ENCODE measurements at regions of chr11 and their contacts with region 1.

Region 1: GRCh38 chr11:73184953-73185671 is 33.0 kb upstream of the P2RY2 start:
- DNase-seq: peak in 8 of 9 experiments; percentile 10 to 59 (median 46)
- ATAC-seq: peak; percentile 74
- H3K4me3 ChIP-seq: no peak overlapping the region
- H3K4me3 Mint-ChIP-seq: no peak overlapping the region
- H3K27ac ChIP-seq: no peak overlapping the region
- H3K27ac Mint-ChIP-seq: no peak overlapping the region
- H3K4me1 ChIP-seq: peaks cover 5% of the 10 kb centered on the region
- H3K4me1 Mint-ChIP-seq: peaks cover 8% of the 10 kb centered on the region
- H3K27me3 ChIP-seq: peaks cover 0 to 5% of the 10 kb centered on the region in 2 experiments
- H3K27me3 Mint-ChIP-seq: peaks cover 15% of the 10 kb centered on the region
- CTCF ChIP-seq: peak; percentile 68

Region 2: GRCh38 chr11:73012121-73012863 is 172.8 kb before region 1 on chr11:
- CTCF ChIA-PET with region 1: no interaction called
- POLR2A ChIA-PET with region 1: no interaction called
- intact Hi-C with region 1: no loop called
- DNase-seq: no peak
- ATAC-seq: no peak
- H3K4me3 ChIP-seq: no peak overlapping the region
- H3K4me3 Mint-ChIP-seq: no peak overlapping the region
- H3K27ac ChIP-seq: no peak overlapping the region
- H3K27ac Mint-ChIP-seq: no peak overlapping the region
- H3K4me1 ChIP-seq: no peaks in the 10 kb centered on the region
- H3K4me1 Mint-ChIP-seq: peaks cover 2% of the 10 kb centered on the region
- H3K27me3 ChIP-seq: no peaks in the 10 kb centered on the region
- H3K27me3 Mint-ChIP-seq: no peaks in the 10 kb centered on the region
- CTCF ChIP-seq: no peak

Region 3: GRCh38 chr11:73288873-73289707 is 104.0 kb after region 1 on chr11:
- CTCF ChIA-PET with region 1: no interaction called
- POLR2A ChIA-PET with region 1: no interaction called
- intact Hi-C with region 1: loop called in 1 of 2 experiments (anchors 1 kb)
- DNase-seq: peak in 8 of 9 experiments; percentile 13 to 72 (median 52)
- ATAC-seq: peak; percentile 97
- H3K4me3 ChIP-seq: no peak overlapping the region
- H3K4me3 Mint-ChIP-seq: peak overlapping the region; percentile 23
- H3K27ac ChIP-seq: no peak overlapping the region
- H3K27ac Mint-ChIP-seq: no peak overlapping the region
- H3K4me1 ChIP-seq: peaks cover 10% of the 10 kb centered on the region
- H3K4me1 Mint-ChIP-seq: peaks cover 6% of the 10 kb centered on the region
- H3K27me3 ChIP-seq: no peaks in the 10 kb centered on the region
- H3K27me3 Mint-ChIP-seq: peaks cover 2% of the 10 kb centered on the region
- CTCF ChIP-seq: peak; percentile 62

Measured in CD8-positive, alpha-beta T cell (primary cell).